MCF 10A (cell line): ENCODE measurements at regions of chr1 and their contacts with region 1.

Region 1: GRCh38 chr1:234114648-234115307 is 210.3 kb downstream of the SLC35F3 start:
- DNase-seq: peak; percentile 84
- H3K4me3 Mint-ChIP-seq: peak overlapping the region; percentile 57
- H3K27ac Mint-ChIP-seq: no peak overlapping the region
- H3K4me1 Mint-ChIP-seq: peaks cover 13% of the 10 kb centered on the region
- H3K27me3 Mint-ChIP-seq: no peaks in the 10 kb centered on the region
- CTCF ChIP-seq: peak; percentile 97

Region 2: DNA sequence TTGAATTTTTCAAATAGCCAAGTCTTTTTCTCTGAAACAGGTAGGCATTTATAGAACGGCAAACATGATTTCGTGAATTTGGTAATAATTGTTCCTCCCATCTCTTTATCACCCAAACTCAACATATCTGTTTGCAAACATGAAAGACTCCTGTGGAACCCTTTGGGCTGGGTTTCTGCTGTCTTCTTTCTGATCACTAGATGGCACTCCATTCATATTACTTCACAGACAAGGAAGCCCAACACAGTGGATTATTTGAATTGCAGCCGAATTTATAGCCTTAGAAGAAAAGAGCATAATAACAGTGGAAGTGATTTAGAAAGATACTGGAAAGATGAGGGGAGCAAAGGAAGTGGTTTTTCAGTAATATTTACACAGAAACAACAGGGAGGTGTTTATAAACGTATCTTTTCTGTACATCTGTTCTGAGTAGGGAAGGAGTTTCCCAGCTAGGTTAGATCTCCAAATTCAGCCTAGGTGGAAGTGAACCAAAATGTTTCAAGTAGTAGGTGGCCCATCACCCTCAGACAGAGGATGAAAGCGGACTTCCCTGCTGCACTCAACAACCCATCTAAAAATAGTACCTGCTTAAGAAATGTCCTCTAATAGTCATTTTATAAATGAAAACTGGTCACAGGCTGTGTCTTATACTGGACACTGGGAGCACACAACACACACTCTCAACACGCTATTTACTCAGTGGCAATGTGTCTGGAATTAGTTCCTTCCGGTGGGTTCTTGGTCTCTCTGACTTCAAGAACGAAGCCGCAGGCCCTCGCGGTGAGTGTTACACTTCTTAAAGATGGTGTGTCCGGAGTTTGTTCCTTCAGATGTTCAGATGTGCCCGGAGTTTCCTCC is 719.7 kb before region 1 on chr1:
- CTCF ChIA-PET with region 1: interaction called, 23 read pairs
- POLR2A ChIA-PET with region 1: no interaction called
- intact Hi-C with region 1: loop called (anchors 1 kb)
- DNase-seq: peak; percentile 81
- H3K4me3 Mint-ChIP-seq: no peak overlapping the region
- H3K27ac Mint-ChIP-seq: no peak overlapping the region
- H3K4me1 Mint-ChIP-seq: no peaks in the 10 kb centered on the region
- H3K27me3 Mint-ChIP-seq: no peaks in the 10 kb centered on the region
- CTCF ChIP-seq: peak; percentile 98

Region 3: GRCh38 chr1:234125283-234125682 is 10.5 kb after region 1 on chr1:
- CTCF ChIA-PET with region 1: interaction called, 96 read pairs
- POLR2A ChIA-PET with region 1: interaction called, 6 read pairs
- intact Hi-C with region 1: no loop called
- DNase-seq: peak; percentile 79
- H3K4me3 Mint-ChIP-seq: no peak overlapping the region
- H3K27ac Mint-ChIP-seq: no peak overlapping the region
- H3K4me1 Mint-ChIP-seq: no peaks in the 10 kb centered on the region
- H3K27me3 Mint-ChIP-seq: no peaks in the 10 kb centered on the region
- CTCF ChIP-seq: peak; percentile 64

Region 4: DNA sequence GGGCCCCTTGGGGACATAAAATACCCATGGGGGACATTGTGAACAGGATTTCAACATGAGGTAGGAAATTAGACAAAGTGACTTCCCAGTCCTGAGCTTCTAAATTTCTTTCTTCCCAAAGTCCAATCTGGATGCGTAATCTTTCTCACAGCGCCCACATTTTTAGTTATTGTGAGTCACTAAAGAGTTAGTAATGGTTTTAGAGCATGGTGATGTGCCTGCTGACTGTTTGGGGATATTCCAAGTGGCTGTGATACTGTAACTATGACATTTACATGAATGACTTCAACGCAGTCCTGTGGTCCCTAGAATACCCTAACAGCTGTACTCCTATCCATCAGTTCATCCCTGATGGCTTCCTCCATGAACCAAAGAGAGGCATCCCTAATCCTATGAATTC is 34.4 kb after region 1 on chr1:
- CTCF ChIA-PET with region 1: interaction called, 7 read pairs
- POLR2A ChIA-PET with region 1: interaction called, 3 read pairs
- intact Hi-C with region 1: loop called (anchors 1 kb)
- DNase-seq: peak; percentile 53
- H3K4me3 Mint-ChIP-seq: no peak overlapping the region
- H3K27ac Mint-ChIP-seq: no peak overlapping the region
- H3K4me1 Mint-ChIP-seq: peaks cover 17% of the 10 kb centered on the region
- H3K27me3 Mint-ChIP-seq: no peaks in the 10 kb centered on the region
- CTCF ChIP-seq: no peak

Region 5: GRCh38 chr1:234326497-234327366 is 212.0 kb after region 1 on chr1:
- CTCF ChIA-PET with region 1: interaction called, 17 read pairs
- POLR2A ChIA-PET with region 1: no interaction called
- intact Hi-C with region 1: loop called (anchors 1 kb)
- DNase-seq: peak; percentile 82
- H3K4me3 Mint-ChIP-seq: no peak overlapping the region
- H3K27ac Mint-ChIP-seq: no peak overlapping the region
- H3K4me1 Mint-ChIP-seq: peaks cover 6% of the 10 kb centered on the region
- H3K27me3 Mint-ChIP-seq: peaks cover 14% of the 10 kb centered on the region
- CTCF ChIP-seq: peak; percentile 84

Region 6: DNA sequence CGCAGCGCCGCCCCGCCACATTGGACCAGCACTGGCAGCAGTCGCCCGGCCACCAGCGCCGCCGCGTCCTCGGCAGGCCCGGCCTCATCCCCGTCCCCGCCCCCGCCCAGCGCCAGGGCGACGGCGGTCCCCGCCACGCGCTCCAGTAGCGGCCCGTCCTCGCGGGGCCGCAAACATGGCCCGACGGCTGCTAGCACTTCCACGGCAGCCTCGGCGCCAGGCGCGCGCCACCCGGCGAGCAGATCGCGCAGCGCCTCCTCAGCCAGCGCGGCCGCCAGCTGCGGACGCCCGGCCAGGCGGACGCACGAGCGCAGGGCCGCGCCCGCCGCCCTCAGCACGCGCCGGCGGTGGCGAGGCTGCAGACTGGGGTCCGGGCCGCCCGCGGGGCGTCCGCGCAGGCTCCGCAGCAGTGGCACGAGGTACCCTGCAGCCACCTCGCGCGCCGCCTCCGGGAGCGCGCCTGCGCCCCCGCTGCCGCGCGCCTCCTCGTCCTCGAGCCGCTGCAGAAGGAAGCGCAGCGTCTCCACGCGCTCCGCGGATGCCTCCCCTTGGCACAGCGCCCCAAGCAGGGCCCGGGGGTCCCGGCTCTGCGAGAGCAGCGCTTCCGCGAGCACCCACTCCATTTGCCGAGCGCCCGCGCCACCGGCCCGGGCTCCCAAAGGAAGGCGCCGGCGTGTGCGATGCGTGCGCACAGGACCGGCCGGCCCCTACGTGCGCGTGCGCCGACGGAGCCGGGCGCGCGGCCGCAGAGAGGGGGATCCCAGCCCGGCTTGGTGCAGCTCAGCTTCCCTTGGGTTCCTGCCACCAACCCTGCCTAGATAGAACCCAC is 363.9 kb after region 1 on chr1 and contains the start of gene TARBP1:
- CTCF ChIA-PET with region 1: interaction called, 13 read pairs
- POLR2A ChIA-PET with region 1: interaction called, 5 read pairs
- intact Hi-C with region 1: loop called (anchors 5 kb)
- DNase-seq: peak; percentile 89
- H3K4me3 Mint-ChIP-seq: peak within 1 kb of the TSS; percentile 77
- H3K27ac Mint-ChIP-seq: no peak within 1 kb of the TSS
- H3K4me1 Mint-ChIP-seq: peaks cover 31% of the 10 kb centered on the region
- H3K27me3 Mint-ChIP-seq: peaks cover 23% of the 10 kb centered on the region
- CTCF ChIP-seq: no peak
- total RNA-seq, gene TARBP1: 45.5 and 52.5 TPM in 2 replicates

Region 7: GRCh38 chr1:235075188-235075926 is 960.6 kb after region 1 on chr1:
- CTCF ChIA-PET with region 1: no interaction called
- POLR2A ChIA-PET with region 1: no interaction called
- intact Hi-C with region 1: loop called (anchors 5 kb)
- DNase-seq: peak; percentile 92
- H3K4me3 Mint-ChIP-seq: no peak overlapping the region
- H3K27ac Mint-ChIP-seq: peak overlapping the region; percentile 52
- H3K4me1 Mint-ChIP-seq: peaks cover 30% of the 10 kb centered on the region
- H3K27me3 Mint-ChIP-seq: no peaks in the 10 kb centered on the region
- CTCF ChIP-seq: no peak